ENCODE measurements at regions of chr4 and their contacts with region 1.

Region 1: GRCh38 chr4:147924604-147925412 is 192.9 kb downstream of the ARHGAP10 start:
- DNase-seq: peak; percentile 20
- H3K4me3 ChIP-seq: no peak overlapping the region
- CTCF ChIP-seq: peak; percentile 76

Region 2: DNA sequence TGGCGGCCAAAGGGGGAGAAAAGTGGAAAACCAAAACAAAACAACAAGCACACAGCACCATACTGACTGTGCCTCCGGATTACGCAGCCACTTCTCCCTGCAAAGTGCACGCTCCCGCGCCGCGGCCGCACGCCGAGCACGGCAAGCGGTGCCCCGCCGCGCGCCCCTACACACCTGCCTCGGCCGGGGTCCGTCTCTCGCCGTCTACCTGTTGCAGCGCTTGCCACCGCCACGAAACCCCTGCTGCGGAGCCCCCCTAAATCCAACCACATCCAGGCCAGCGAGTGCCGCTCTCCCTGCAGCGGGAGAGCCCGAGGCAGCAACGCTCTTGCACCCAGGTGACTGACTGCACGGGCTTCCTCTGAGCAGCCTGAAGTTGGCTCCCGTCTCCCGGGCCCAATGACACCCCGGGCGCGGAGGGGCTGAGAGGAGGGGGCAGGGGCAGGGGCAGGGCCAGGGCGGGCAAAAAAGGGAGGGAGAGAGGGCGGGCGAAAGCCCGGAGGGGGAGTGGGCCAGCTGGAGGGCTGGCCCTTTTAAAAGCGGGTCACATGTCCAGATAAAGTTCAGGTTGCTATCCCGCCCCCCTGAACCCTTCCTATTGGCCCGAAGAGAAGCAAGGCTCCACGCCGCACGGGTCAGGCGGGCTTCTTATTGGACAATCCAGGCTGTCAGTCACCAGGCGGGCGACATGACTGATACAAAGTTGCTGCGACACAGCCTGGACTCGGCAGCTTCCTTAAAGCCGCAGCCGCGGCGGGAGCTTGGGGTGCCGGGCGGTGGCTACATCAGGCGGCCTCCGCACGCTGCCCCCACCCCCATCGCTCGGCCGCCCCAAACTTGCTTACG is 517.4 kb after region 1 on chr4 and contains the start of gene NR3C2:
- in situ Hi-C with region 1: loop called (anchors 25 kb)
- DNase-seq: peak; percentile 93
- H3K4me3 ChIP-seq: peak within 1 kb of the TSS; percentile 86
- CTCF ChIP-seq: no peak

Measured in astrocyte of the cerebellum (primary cell).